Dorsolateral prefrontal cortex (tissue), 120 donors: ENCODE measurements at regions of chr15 and their contacts with region 1.

Region 1: GRCh38 chr15:80789296-80789695 is 10.1 kb downstream of the CEMIP start:
- DNase-seq: no peak
- H3K4me3 ChIP-seq: peak overlapping the region in 1 of 59 donors; percentile 37
- H3K27ac ChIP-seq: peak overlapping the region in 5 of 59 donors; percentile 14 to 74 (median 21)
- H3K27me3 ChIP-seq: no peaks in the 10 kb centered on the region
- CTCF ChIP-seq: no peak

Region 2: GRCh38 chr15:80727196-80727595 is 62.1 kb before region 1 on chr15:
- intact Hi-C with region 1: no loop called
- DNase-seq: no peak
- H3K4me3 ChIP-seq: no peak overlapping the region
- H3K27ac ChIP-seq: peak overlapping the region in 1 of 59 donors; percentile 21
- H3K27me3 ChIP-seq: no peaks in the 10 kb centered on the region
- CTCF ChIP-seq: no peak

Region 3: GRCh38 chr15:80823995-80824394 is 34.7 kb after region 1 on chr15:
- intact Hi-C with region 1: loop called in 1 of 2 experiments (anchors 2 kb)
- DNase-seq: no peak
- H3K4me3 ChIP-seq: no peak overlapping the region
- H3K27ac ChIP-seq: peak overlapping the region in 4 of 59 donors; percentile 44 to 92 (median 62)
- H3K27me3 ChIP-seq: no peaks in the 10 kb centered on the region
- CTCF ChIP-seq: no peak